ENCODE measurements at regions of chr11 and their contacts with region 1.

Region 1: GRCh38 chr11:128157423-128158298 is 429.7 kb downstream of the ETS1 start:
- DNase-seq: peak; percentile 38 to 86
- ATAC-seq: peak; percentile 86 to 94 (median 92)
- H3K4me3 ChIP-seq: peak overlapping the region; percentile 14
- H3K4me3 Mint-ChIP-seq: peak overlapping the region; percentile 70
- H3K27ac ChIP-seq: no peak overlapping the region
- H3K27ac Mint-ChIP-seq: peak overlapping the region in 1 of 2 donors; percentile 78
- H3K4me1 ChIP-seq: no peaks in the 10 kb centered on the region
- H3K4me1 Mint-ChIP-seq: peaks cover 9 to 12% of the 10 kb centered on the region in 2 donors
- H3K27me3 ChIP-seq: no peaks in the 10 kb centered on the region
- H3K27me3 Mint-ChIP-seq: no peaks in the 10 kb centered on the region
- CTCF ChIP-seq: peak; percentile 97

Region 2: GRCh38 chr11:128831174-128832120 is 673.8 kb after region 1 on chr11:
- intact Hi-C with region 1: loop called (anchors 1 kb)
- DNase-seq: peak; percentile 82 to 94
- ATAC-seq: peak; percentile 86 to 90 (median 88)
- H3K4me3 ChIP-seq: peak overlapping the region; percentile 13
- H3K4me3 Mint-ChIP-seq: peak overlapping the region; percentile 84
- H3K27ac ChIP-seq: peak overlapping the region; percentile 70
- H3K27ac Mint-ChIP-seq: peak overlapping the region; percentile 87 to 88
- H3K4me1 ChIP-seq: peaks cover 16% of the 10 kb centered on the region
- H3K4me1 Mint-ChIP-seq: peaks cover 25 to 36% of the 10 kb centered on the region in 2 donors
- H3K27me3 ChIP-seq: no peaks in the 10 kb centered on the region
- H3K27me3 Mint-ChIP-seq: no peaks in the 10 kb centered on the region
- CTCF ChIP-seq: peak; percentile 95

Region 3: GRCh38 chr11:128848815-128849455 is 691.3 kb after region 1 on chr11:
- intact Hi-C with region 1: loop called (anchors 5 kb)
- DNase-seq: peak; percentile 69 to 79
- ATAC-seq: peak; percentile 79 to 89 (median 87)
- H3K4me3 ChIP-seq: no peak overlapping the region
- H3K4me3 Mint-ChIP-seq: no peak overlapping the region
- H3K27ac ChIP-seq: no peak overlapping the region
- H3K27ac Mint-ChIP-seq: peak overlapping the region; percentile 1 to 12
- H3K4me1 ChIP-seq: peaks cover 12% of the 10 kb centered on the region
- H3K4me1 Mint-ChIP-seq: peaks cover 17 to 19% of the 10 kb centered on the region in 2 donors
- H3K27me3 ChIP-seq: no peaks in the 10 kb centered on the region
- H3K27me3 Mint-ChIP-seq: no peaks in the 10 kb centered on the region
- CTCF ChIP-seq: peak; percentile 92

Measured in natural killer cell (primary cell).